ENCODE measurements at regions of chr5 and their contacts with region 1.

Region 1: DNA sequence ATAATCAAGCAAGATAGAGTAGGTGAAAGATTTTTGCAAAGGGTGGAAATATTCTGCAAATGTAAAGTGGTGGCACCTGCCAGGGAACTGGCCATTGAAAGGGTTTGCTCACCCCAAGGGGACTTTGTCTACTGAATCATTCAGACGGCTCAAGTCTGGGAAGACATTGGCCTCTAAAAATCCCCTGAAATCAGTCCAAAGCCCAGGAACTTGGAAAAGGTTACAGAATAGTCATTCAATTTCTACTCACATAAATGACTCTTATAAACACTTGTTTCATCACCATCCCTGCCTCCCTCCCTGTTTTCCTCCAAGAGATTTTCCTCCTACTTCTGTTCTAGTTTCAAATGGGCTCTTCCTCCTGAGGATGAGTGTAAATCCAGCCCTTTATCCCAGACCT is 28.5 kb downstream of the ZNF366 start:
- DNase-seq: no peak
- ATAC-seq: no peak
- H3K4me3 ChIP-seq: no peak overlapping the region
- H3K27ac ChIP-seq: no peak overlapping the region
- H3K4me1 ChIP-seq: peaks cover 31% of the 10 kb centered on the region
- H3K27me3 ChIP-seq: no peaks in the 10 kb centered on the region
- CTCF ChIP-seq: no peak
- EP300 ChIP-seq: no peak
- POLR2A ChIP-seq: no peak
- RAD21 ChIP-seq: no peak

Region 2: GRCh38 chr5:72510610-72511181 is 32.0 kb after region 1 on chr5:
- CTCF ChIA-PET with region 1: interaction called, 3 read pairs
- POLR2A ChIA-PET with region 1: interaction called, 4 read pairs
- RAD21 ChIA-PET with region 1: interaction called, 9 read pairs
- SMC1A ChIA-PET with region 1: interaction called, 24 read pairs
- in situ Hi-C with region 1: no loop called
- intact Hi-C with region 1: no loop called
- DNase-seq: no peak
- ATAC-seq: no peak
- H3K4me3 ChIP-seq: no peak overlapping the region
- H3K27ac ChIP-seq: peak overlapping the region; percentile 33
- H3K4me1 ChIP-seq: peaks cover 45% of the 10 kb centered on the region
- H3K27me3 ChIP-seq: no peaks in the 10 kb centered on the region
- CTCF ChIP-seq: no peak
- EP300 ChIP-seq: no peak
- POLR2A ChIP-seq: no peak
- RAD21 ChIP-seq: no peak

Region 3: DNA sequence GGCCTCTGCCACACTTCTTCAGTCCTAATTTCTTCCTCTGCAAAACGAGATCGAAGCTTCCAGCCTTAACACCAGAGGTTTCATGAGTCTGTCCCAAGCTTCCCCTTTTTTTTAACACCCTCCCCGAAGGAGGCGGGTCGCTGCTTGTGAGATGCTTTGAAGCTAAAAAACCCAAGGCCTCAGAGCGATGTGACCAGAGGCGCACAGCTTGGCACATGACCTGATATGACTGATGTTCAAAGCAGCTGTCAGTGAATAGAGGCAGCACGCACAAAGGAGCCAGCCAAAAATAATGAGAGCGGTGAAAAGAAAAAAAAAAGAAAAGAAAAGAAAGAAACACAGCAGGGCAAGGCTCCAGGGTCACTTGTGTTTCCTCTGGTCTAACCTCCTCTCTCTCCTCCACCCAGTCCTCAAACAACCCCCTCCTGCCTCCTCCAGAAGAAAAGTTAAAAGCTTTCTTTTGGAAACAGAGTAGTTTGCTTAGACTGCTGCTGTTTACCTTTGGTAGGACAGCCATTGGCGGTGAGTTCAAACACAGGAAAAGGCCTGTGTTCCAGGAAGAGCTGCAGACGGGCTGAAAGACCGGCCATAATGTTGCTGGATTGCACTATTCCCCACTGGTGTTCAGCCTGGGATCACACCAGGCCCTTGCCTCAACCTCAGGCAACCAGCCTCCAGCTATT is 39.5 kb after region 1 on chr5:
- CTCF ChIA-PET with region 1: interaction called, 11 read pairs
- POLR2A ChIA-PET with region 1: no interaction called
- RAD21 ChIA-PET with region 1: no interaction called
- SMC1A ChIA-PET with region 1: interaction called, 20 read pairs
- in situ Hi-C with region 1: no loop called
- intact Hi-C with region 1: no loop called
- DNase-seq: no peak
- ATAC-seq: no peak; the same call in 2 of the 3 replicates
- H3K4me3 ChIP-seq: no peak overlapping the region
- H3K27ac ChIP-seq: peak overlapping the region; percentile 34
- H3K4me1 ChIP-seq: peaks cover 11% of the 10 kb centered on the region
- H3K27me3 ChIP-seq: no peaks in the 10 kb centered on the region
- CTCF ChIP-seq: no peak
- EP300 ChIP-seq: no peak
- POLR2A ChIP-seq: no peak
- RAD21 ChIP-seq: no peak